ENCODE measurements at regions of chr1 and their contacts with region 1.

Region 1: GRCh38 chr1:6401673-6402072 is 8.1 kb upstream of the ACOT7 start:
- DNase-seq: no peak
- ATAC-seq: no peak
- H3K4me3 ChIP-seq: no peak overlapping the region
- H3K27ac ChIP-seq: no peak overlapping the region
- H3K4me1 ChIP-seq: no peaks in the 10 kb centered on the region
- H3K27me3 ChIP-seq: no peaks in the 10 kb centered on the region
- CTCF ChIP-seq: no peak
- POLR2A ChIP-seq: no peak

Region 2: DNA sequence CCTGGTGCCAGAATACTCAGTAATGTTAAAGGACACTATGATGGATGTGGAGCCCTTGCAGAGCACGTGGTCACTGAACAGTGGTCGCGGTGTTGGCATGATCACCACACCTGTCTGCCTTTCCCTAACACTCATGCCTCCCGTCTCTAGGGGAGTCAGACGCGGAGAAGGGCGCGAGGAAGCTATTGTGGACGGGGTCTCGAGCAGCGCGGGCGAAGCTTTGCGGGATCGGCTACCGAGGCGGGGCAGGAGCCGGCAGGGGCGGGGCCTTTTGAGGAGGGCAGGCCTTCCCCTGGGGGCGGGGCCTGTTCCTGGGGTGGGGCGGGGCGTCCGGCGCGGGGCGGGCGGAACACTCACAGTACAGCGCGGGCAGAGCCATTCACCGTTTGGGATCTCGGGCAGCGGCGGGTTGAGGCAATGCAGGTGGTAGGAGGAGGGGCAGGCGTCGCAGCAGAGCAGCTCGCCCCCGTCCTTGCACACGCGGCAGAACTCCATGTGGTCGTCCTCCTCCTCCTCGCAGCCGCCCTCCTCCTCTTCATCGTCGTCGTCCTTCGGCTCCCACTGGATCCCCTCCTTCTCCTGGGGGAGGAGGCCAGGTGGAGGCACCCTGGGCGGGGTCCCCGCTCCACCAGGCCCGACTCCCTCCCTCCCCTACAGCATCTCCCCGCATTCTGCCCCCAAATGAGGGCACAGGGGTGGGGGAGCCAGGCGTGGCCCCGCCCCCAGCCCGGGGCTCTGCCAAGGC is 253.0 kb before region 1 on chr1:
- intact Hi-C with region 1: no loop called
- DNase-seq: peak; percentile 47 to 71 (median 56)
- ATAC-seq: peak; percentile 76
- H3K4me3 ChIP-seq: no peak overlapping the region
- H3K27ac ChIP-seq: no peak overlapping the region
- H3K4me1 ChIP-seq: no peaks in the 10 kb centered on the region
- H3K27me3 ChIP-seq: peaks cover 0 to 12% of the 10 kb centered on the region in 2 donors
- CTCF ChIP-seq: no peak
- POLR2A ChIP-seq: no peak

Region 3: DNA sequence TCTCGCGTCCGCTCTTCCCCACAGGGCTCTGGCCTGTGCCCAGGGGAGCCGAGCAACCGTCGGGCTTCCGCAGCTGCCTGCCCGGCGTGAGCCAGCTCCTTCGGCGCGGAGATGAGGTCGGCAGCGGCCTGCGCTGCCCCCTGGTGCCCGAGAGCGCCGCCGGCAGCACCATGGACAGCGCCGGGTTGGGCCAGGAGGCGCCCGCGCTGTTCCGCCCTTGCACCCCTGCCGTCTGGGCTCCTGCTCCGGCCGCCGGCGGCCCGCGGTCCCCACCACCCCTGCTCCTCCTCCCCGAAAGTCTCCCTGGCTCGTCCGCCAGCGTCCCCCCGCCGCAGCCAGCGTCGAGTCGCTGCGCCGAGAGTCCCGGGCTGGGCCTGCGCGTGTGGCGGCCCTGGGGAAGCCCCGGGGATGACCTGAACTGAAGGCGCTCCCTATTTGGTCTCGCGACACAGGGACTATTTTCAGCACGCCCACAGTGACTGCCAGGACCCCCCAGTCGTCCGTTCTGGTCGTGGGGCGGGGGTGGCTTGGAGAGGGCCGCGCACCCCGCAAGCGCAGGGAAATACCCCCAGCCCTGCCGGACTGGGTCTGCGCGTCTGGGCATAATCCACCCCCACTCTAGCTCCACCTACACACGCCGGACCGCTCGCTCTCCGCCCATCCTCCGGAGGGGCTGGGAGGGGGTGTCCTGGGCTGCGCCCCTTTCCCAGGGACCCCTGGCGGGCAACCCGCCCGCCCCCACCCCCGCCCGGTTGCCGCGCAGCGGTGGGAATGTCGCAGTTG is 156.4 kb before region 1 on chr1:
- intact Hi-C with region 1: loop called (anchors 5 kb)
- DNase-seq: peak; percentile 83 to 87 (median 83)
- ATAC-seq: peak; percentile 86
- H3K4me3 ChIP-seq: no peak overlapping the region
- H3K27ac ChIP-seq: no peak overlapping the region
- H3K4me1 ChIP-seq: peaks cover 35% of the 10 kb centered on the region
- H3K27me3 ChIP-seq: peaks cover 4 to 49% of the 10 kb centered on the region in 2 donors
- CTCF ChIP-seq: peak; percentile 75 to 97 (median 88)
- POLR2A ChIP-seq: peak in 1 of 3 donors; percentile 7

Region 4: DNA sequence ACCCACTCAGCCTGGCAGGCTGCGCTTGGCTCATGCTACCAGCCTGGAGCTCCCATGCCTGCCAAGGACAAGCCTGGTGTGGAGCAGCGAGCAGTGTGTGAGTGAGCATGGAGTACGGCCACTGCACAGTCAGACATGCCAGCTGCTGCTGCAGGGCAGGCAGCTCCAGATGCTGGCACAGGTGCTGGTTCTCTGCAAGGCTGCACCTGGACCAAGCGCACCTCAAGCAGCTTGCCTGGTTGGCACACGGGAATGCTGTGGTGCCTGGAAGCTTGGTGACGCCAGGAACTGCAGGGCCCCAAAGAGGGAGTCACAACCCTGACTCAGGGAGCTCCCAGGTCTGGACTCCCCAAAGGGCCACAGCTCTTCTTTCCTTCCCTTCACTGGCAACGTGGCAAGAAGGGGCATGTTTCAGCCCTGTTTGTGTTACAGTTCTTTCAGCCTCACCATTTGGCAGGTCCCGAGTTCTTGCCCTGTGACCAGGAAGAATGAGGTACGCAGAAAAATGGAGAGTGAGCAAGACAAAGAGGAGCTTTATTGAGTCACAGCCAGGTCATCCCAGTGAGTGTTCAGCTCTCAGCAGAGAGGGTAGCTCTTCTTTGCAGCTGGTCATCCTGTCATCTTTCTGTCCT is 34.2 kb before region 1 on chr1:
- intact Hi-C with region 1: loop called (anchors 5 kb)
- DNase-seq: peak; percentile 37 to 78 (median 63)
- ATAC-seq: peak; percentile 69
- H3K4me3 ChIP-seq: no peak overlapping the region
- H3K27ac ChIP-seq: no peak overlapping the region
- H3K4me1 ChIP-seq: peaks cover 3% of the 10 kb centered on the region
- H3K27me3 ChIP-seq: no peaks in the 10 kb centered on the region
- CTCF ChIP-seq: no peak
- POLR2A ChIP-seq: no peak